ENCODE measurements at regions of chr20 and their contacts with region 1.

Region 1: DNA sequence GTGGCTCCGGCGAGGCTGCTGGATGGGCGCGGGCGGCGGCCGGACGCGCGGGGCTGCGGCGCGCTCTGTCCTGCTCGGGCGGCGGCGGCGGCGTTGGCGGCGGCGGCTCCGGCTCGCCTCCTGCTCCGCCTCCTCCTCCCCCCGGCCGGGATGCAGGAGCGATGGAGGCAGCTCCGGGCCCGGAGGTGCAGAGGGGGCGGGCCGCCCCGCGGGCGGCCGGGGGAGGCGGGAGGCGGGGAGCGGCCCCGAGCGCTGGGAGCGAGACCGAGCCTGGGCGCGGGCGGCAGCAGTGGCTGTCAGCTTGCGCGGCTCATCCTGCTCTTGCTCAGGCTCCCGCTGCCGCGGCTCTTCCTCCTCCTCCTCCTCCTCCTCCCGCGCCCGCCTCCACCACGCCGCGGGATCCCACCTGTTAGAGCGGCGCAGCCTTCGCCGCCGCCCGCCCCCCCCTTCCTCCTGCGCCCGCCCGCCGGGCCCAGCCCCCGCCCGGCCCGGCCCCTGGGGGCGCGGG is at the start of gene NOL4L:
- DNase-seq: no peak
- H3K4me3 ChIP-seq: peak within 1 kb of the TSS; percentile 53 to 78 (median 65)
- H3K27ac ChIP-seq: peak within 1 kb of the TSS; percentile 49 to 78 (median 69)
- H3K4me1 ChIP-seq: peaks cover 0 to 27% (median 16%) of the 10 kb centered on the region in 4 donors
- H3K27me3 ChIP-seq: no peaks in the 10 kb centered on the region
- CTCF ChIP-seq: no peak
- EP300 ChIP-seq: no peak
- POLR2A ChIP-seq: no peak
- total RNA-seq, gene NOL4L: 9.2 to 23.8 (median 14.0) TPM

Region 2: GRCh38 chr20:32521780-32522525 is 63.1 kb before region 1 on chr20:
- intact Hi-C with region 1: loop called (anchors 2 kb)
- DNase-seq: peak; percentile 80
- H3K4me3 ChIP-seq: no peak overlapping the region
- H3K27ac ChIP-seq: no peak overlapping the region
- H3K4me1 ChIP-seq: peaks cover 0 to 26% (median 23%) of the 10 kb centered on the region in 4 donors
- H3K27me3 ChIP-seq: no peaks in the 10 kb centered on the region
- CTCF ChIP-seq: peak; percentile 79 to 90 (median 83)
- EP300 ChIP-seq: no peak
- POLR2A ChIP-seq: no peak

Region 3: DNA sequence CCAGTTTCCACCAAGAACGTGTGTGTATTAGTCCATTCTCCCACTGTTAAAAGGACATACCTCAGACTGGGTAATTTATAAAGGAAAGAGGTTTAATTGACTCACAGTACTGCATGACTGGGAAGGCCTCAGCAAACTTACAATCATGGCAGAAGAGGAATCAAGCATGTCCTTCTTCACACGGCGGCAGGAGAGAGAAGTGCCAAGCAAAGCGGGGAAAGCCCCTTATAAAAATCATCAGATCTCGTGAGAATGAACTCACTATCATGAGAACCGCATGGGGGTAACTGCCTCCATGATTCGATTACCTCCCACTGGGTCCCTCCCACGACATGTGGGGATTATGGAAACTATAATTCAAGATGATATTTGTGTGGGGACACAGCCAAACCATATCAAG is 75.6 kb after region 1 on chr20:
- intact Hi-C with region 1: no loop called
- DNase-seq: no peak
- H3K4me3 ChIP-seq: no peak overlapping the region
- H3K27ac ChIP-seq: no peak overlapping the region
- H3K4me1 ChIP-seq: no peaks in the 10 kb centered on the region
- H3K27me3 ChIP-seq: no peaks in the 10 kb centered on the region
- CTCF ChIP-seq: no peak
- EP300 ChIP-seq: no peak
- POLR2A ChIP-seq: no peak